OCI-LY7 (cell line): ENCODE measurements at regions of chr22 and their contacts with region 1.

Region 1: GRCh38 chr22:39471381-39472141 is 14.7 kb downstream of the MGAT3 start:
- DNase-seq: no peak
- H3K4me3 ChIP-seq: peak overlapping the region; percentile 25
- H3K27ac ChIP-seq: peak overlapping the region; percentile 66
- H3K4me1 ChIP-seq: peaks cover 82% of the 10 kb centered on the region
- CTCF ChIP-seq: no peak

Region 2: GRCh38 chr22:39135090-39135896 is 336.3 kb before region 1 on chr22:
- CTCF ChIA-PET with region 1: no interaction called
- POLR2A ChIA-PET with region 1: no interaction called
- intact Hi-C with region 1: no loop called
- DNase-seq: peak; percentile 67
- H3K4me3 ChIP-seq: no peak overlapping the region
- H3K27ac ChIP-seq: no peak overlapping the region
- H3K4me1 ChIP-seq: no peaks in the 10 kb centered on the region
- CTCF ChIP-seq: peak; percentile 82

Region 3: GRCh38 chr22:39395936-39396796 is 75.4 kb before region 1 on chr22:
- CTCF ChIA-PET with region 1: interaction called, 5 read pairs
- POLR2A ChIA-PET with region 1: no interaction called
- intact Hi-C with region 1: loop called (anchors 5 kb)
- DNase-seq: no peak
- H3K4me3 ChIP-seq: no peak overlapping the region
- H3K27ac ChIP-seq: no peak overlapping the region
- H3K4me1 ChIP-seq: peaks cover 13% of the 10 kb centered on the region
- CTCF ChIP-seq: no peak

Region 4: DNA sequence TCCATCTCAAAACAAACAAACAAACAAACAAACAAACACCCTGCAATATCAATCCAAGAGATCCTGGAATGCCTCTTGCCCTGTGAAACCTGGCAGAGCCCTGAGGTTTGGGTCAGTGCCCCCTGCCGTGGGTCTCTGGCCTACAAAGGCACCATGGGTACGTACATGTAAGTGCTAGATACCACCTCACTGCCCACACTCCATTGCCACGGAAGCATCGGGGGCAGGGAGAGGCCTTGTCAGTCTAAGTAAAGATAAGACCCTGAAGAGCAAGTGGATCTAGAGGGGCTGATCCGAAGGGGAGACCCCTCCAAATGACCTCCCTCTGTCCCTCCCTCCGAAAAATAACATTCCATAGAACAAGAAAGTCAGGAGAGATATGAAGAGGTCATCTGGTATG is 28.5 kb after region 1 on chr22:
- CTCF ChIA-PET with region 1: no interaction called
- POLR2A ChIA-PET with region 1: no interaction called
- intact Hi-C with region 1: no loop called
- DNase-seq: no peak
- H3K4me3 ChIP-seq: no peak overlapping the region
- H3K27ac ChIP-seq: no peak overlapping the region
- H3K4me1 ChIP-seq: peaks cover 32% of the 10 kb centered on the region
- CTCF ChIP-seq: no peak

Region 5: GRCh38 chr22:39773976-39774539 is 302.5 kb after region 1 on chr22:
- CTCF ChIA-PET with region 1: no interaction called
- POLR2A ChIA-PET with region 1: no interaction called
- intact Hi-C with region 1: no loop called
- DNase-seq: peak; percentile 1
- H3K4me3 ChIP-seq: no peak overlapping the region
- H3K27ac ChIP-seq: no peak overlapping the region
- H3K4me1 ChIP-seq: no peaks in the 10 kb centered on the region
- CTCF ChIP-seq: no peak